K562 (cell line): ENCODE measurements at regions of chr1 and their contacts with region 1.

Region 1: DNA sequence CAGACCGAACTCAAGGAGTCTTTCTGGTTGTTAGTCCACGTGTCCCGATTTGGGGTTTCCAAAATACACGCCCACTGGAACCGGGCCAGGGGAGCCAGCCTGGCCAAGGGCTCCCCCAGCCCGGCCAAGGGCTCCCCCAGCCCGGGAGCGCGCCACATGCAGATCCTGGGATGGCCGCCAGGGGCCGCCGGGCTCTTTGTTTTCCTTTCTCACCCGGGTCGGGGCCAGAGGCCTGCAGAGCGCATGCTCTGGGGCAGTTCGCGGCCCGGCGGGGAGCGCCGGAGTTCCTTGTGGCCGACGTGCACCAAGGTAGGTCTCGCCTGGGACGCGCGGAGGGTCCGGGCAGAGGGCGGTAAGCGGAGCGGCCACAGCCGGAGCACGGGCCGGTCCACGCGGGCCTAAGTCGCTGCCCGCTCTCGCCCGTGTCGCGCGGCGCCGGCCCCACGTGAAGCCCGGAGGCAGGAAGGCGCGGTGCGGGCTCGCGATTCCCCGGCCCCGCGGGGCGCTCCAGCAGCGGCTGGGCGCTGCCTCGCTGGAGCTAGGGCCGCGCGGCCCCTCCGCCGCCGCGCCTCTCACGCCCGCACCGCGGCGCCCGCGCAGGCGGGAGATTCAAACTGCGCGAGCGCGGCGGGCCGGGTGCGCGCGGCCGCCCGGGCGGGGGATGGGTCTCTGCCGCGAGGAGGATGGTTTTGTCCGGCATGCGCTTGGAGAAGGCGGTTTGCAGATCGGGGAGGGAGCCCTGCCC is 12.3 kb downstream of the RCC1 start:
- DNase-seq: peak; percentile 93 to 96 (median 94)
- ATAC-seq: peak; percentile 76
- H3K4me3 ChIP-seq: peak overlapping the region; percentile 74
- H3K27ac ChIP-seq: peak overlapping the region; percentile 99
- H3K4me1 ChIP-seq: peaks cover 46 to 47% of the 10 kb centered on the region in 2 experiments
- H3K27me3 ChIP-seq: no peaks in the 10 kb centered on the region
- CTCF ChIP-seq: peak; percentile 96 to 99 (median 96)
- EP300 ChIP-seq: no peak
- POLR2A ChIP-seq: peak; percentile 87
- RAD21 ChIP-seq: peak; percentile 91 to 94

Region 2: DNA sequence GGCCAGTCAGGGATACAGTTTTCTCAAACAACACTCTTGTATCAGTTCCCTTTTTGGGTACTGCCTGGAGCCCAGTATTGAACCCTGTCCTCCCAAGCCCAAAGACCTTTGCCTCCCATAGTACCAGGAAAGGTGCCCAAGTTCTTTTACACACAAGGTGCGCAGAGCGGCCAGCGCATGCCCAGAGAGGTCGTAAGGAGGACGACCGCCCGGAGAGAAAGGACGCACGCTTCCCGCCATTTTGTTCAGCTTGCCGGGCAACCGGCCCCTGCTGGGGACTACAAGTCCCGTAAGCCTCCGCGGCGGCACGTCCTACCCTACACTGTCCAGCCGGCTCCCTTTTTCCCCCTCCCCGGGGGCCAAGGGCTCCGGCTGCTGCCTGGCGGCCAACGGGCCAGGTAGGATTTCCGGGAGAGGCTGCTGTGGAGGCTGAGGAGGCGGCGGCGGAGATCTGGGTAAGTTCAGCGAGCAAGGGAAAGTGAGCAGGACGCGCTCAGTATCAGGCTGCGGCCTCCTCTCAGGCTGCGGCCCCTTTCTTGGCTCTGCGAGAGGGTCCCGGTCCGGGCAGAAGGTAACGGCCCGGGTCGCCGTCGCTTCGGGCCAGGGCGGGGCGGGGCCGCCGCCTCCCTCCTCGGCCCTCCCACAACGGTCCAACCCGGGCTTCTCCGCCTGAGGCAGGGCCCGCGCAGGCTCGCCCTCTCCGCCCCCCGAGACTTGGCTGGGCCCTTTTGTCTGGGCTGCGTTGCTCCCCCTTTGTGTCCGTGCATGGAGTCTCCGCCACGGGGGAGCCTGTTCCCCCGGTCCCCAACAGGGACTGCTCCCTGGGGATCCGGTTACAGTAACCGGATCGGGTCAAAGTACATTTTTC is 148.6 kb before region 1 on chr1 and contains the start of gene PHACTR4:
- CTCF ChIA-PET with region 1: no interaction called
- POLR2A ChIA-PET with region 1: no interaction called
- in situ Hi-C with region 1: no loop called
- intact Hi-C with region 1: loop called (anchors 5 kb)
- DNase-seq: peak; percentile 95 to 99 (median 97)
- ATAC-seq: peak; percentile 97
- H3K4me3 ChIP-seq: peak within 1 kb of the TSS; percentile 55
- H3K27ac ChIP-seq: peak within 1 kb of the TSS; percentile 89
- H3K4me1 ChIP-seq: peaks cover 17 to 31% of the 10 kb centered on the region in 2 experiments; a peak in 4 of 5 replicates
- H3K27me3 ChIP-seq: no peaks in the 10 kb centered on the region
- CTCF ChIP-seq: peak in 1 of 3 experiments; percentile 13; a peak in 2 of 6 replicates
- EP300 ChIP-seq: peak; percentile 34
- POLR2A ChIP-seq: peak; percentile 99
- RAD21 ChIP-seq: peak in 1 of 2 experiments; percentile 10; a peak in 2 of 4 replicates
- polyA plus RNA-seq, gene PHACTR4: 12.8 to 14.2 TPM

Region 3: DNA sequence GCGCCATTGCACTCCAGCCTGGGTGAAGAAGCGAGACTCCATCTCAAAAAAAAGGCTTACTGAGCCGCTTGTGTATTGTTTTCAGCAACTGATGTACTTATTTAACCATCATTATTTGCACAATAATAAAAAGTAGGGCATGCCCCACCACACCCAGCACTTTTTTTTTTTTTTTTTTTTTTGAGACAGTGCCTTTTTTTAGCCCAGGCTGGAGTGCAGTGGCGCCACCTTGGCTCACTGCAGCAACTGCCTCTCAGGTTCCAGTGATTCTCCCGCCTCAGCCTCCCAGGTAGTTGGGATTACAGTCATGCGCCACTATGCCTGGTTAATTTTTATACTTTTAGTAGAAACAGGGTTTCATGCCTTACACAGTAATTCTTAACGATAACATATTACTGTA is 22.5 kb after region 1 on chr1:
- CTCF ChIA-PET with region 1: no interaction called
- POLR2A ChIA-PET with region 1: interaction called, 17 read pairs
- in situ Hi-C with region 1: no loop called
- intact Hi-C with region 1: no loop called
- DNase-seq: peak in 1 of 4 experiments; percentile 41
- ATAC-seq: peak; percentile 37
- H3K4me3 ChIP-seq: no peak overlapping the region
- H3K27ac ChIP-seq: no peak overlapping the region
- H3K4me1 ChIP-seq: peaks cover 0 to 3% of the 10 kb centered on the region in 2 experiments; a peak in 2 of 5 replicates
- H3K27me3 ChIP-seq: no peaks in the 10 kb centered on the region
- CTCF ChIP-seq: peak in 2 of 3 experiments; percentile 40 to 47; a peak in 5 of 6 replicates
- EP300 ChIP-seq: no peak
- POLR2A ChIP-seq: no peak
- RAD21 ChIP-seq: no peak

Region 4: DNA sequence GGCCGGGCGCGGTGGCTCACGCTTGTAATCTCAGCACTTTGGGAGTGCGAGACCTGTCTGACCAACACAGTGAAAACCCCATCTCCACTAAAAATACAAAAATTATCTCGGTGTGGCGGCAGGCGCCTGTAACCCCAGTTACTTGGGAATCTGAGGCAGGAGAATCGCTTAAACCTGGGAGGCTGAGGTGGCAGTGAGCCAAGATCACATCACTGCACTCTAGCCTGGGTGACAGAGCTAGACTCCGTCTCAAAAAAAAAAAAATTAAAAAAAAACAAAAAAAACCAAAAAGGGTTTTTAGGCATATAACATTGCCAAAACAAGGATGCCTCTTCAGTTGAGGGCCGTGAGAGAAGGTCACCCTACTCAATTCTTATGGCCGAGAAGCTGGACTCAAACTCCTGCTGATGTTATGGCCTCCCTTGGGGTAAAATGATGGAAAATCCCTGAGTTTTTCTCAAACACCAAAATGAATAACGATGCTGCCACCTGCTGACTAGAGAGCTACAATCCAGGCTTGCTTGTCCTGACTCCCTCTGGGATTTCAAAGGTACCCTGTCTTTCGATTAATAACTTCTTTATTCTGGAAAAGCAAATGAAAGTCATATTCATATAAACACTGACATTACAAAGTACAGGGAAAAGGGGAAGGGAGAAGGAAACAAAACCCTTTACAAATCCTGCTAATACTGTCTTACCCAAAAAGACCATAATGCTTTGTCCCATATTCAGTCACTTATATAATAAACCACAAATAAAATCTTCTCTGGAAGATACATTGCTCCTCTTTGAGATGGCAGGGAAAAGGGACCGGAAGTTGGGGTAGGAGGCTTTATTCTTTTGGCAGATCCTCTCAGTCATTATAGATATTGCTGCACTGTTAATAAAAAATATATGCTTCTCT is 84.6 kb after region 1 on chr1:
- CTCF ChIA-PET with region 1: interaction called, 56 read pairs
- POLR2A ChIA-PET with region 1: interaction called, 81 read pairs
- in situ Hi-C with region 1: loop called (anchors 5 kb)
- intact Hi-C with region 1: loop called (anchors 1 kb)
- DNase-seq: peak; percentile 67 to 86 (median 73)
- ATAC-seq: peak; percentile 91
- H3K4me3 ChIP-seq: no peak overlapping the region
- H3K27ac ChIP-seq: no peak overlapping the region
- H3K4me1 ChIP-seq: no peaks in the 10 kb centered on the region
- H3K27me3 ChIP-seq: no peaks in the 10 kb centered on the region
- CTCF ChIP-seq: peak; percentile 82 to 94 (median 86)
- EP300 ChIP-seq: no peak
- POLR2A ChIP-seq: no peak
- RAD21 ChIP-seq: peak; percentile 92 to 97